SK-N-SH (cell line): ENCODE measurements at regions of chr12 and their contacts with region 1.

Region 1: DNA sequence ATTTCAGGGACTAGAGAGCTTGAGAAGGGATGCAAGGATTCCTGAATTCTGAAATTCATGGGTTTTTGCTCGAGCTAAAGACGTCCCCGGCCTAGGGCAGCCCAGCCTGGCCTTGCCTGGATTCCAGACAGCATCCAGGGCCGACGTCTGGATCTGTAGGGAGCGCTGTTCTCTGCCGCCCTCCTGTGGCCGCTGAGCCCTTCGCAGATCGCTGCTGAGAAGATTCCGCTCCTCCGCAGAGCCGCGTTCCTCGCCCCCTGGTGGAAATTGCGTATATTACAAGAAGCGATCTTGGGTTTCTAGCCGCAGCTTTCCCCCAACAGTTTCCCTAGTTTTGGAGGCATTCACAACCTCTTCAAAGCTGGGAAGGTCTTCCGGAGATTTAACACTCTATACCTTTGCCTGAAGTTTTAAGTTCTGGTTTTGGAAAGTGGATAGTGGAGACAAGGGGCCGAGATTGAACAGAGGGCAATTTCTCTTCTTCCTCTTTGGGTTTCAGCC is 5.1 kb downstream of the CISTR start:
- DNase-seq: peak; percentile 92
- H3K4me3 ChIP-seq: peak overlapping the region in 1 of 2 experiments; percentile 20; a peak in 1 of 4 replicates
- H3K27ac ChIP-seq: no peak overlapping the region
- H3K4me1 ChIP-seq: peaks cover 0 to 10% of the 10 kb centered on the region in 2 experiments; a peak in 1 of 4 replicates
- H3K27me3 ChIP-seq: peaks cover 78% of the 10 kb centered on the region
- CTCF ChIP-seq: peak; percentile 99
- EP300 ChIP-seq: no peak
- RAD21 ChIP-seq: peak; percentile 87

Region 2: GRCh38 chr12:53561590-53561953 is 185.1 kb before region 1 on chr12:
- CTCF ChIA-PET with region 1: interaction called, 11 read pairs
- POLR2A ChIA-PET with region 1: no interaction called
- DNase-seq: no peak
- H3K4me3 ChIP-seq: no peak overlapping the region
- H3K27ac ChIP-seq: peak overlapping the region; percentile 39 to 89; a peak in 3 of 4 replicates
- H3K4me1 ChIP-seq: peaks cover 0 to 19% of the 10 kb centered on the region in 2 experiments; a peak in 2 of 4 replicates
- H3K27me3 ChIP-seq: no peaks in the 10 kb centered on the region
- CTCF ChIP-seq: no peak
- EP300 ChIP-seq: no peak
- RAD21 ChIP-seq: no peak

Region 3: DNA sequence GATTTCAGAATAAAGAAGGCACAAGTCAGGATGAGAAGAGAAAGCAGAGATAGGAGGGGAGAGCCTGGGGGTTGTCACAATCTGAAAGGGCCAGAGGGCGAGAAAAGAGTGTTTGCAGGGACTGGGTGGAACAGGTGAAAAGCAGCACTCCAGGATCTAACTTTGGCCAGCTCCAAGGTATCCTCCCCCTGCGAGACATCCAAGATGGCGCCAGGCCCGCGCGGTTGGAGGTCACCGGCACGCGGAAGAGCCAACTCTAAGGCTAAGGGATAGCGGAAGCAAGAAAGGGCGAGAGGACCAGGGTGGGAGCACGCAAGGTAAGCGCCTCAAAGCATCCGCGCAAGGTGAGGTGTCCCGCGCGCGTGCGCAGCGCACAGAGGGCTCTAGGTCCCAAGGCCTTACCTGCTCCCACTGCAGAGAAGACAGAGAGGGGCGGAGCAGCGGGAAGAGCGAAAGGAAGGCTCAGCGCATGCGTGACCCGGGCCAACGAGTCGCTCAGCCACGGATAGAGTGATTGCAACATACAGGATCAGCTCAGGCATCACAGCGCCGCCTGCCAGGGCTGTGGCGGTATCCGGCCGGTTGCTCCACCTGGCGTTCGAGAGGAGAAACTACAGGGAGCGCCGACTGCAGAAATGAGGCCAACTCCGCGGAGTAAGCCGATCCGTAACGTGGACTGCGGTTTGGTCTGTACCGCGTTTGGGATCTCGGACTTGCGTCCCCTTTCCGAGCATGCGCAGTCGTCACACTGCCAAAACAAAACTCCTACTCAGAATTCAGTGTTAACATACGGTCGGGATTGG is 70.8 kb before region 1 on chr12 and contains the start of gene ATP5MC2:
- CTCF ChIA-PET with region 1: interaction called, 27 read pairs
- POLR2A ChIA-PET with region 1: no interaction called
- DNase-seq: peak; percentile 98
- H3K4me3 ChIP-seq: peak within 1 kb of the TSS; percentile 70 to 75
- H3K27ac ChIP-seq: peak within 1 kb of the TSS; percentile 44 to 91
- H3K4me1 ChIP-seq: peaks cover 0 to 8% of the 10 kb centered on the region in 2 experiments; a peak in 2 of 4 replicates
- H3K27me3 ChIP-seq: no peaks in the 10 kb centered on the region
- CTCF ChIP-seq: peak; percentile 98
- EP300 ChIP-seq: no peak
- RAD21 ChIP-seq: peak; percentile 81
- polyA plus RNA-seq, gene ATP5MC2: 309 and 319 TPM in 2 replicates

Region 4: DNA sequence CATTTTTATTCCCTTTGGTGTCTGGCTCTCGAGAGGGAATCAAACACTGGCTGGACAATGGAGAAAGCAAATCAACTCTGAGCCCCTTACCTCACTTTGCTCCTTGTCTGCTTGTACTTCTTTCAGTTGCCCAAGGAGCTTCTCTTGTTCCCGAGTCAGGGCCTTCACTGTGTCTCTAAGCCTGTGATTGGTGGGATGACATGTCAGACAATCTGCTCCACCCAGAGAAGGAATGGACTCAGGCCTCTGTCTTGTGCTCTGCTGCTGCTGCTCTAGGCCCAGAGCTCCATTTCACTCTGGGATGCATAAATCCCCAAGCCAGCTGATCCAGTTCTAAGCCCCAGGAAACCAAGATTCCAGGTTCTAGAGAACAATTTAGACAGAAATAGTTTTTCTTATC is 27.0 kb before region 1 on chr12:
- CTCF ChIA-PET with region 1: interaction called, 356 read pairs
- POLR2A ChIA-PET with region 1: no interaction called
- DNase-seq: no peak
- H3K4me3 ChIP-seq: no peak overlapping the region
- H3K27ac ChIP-seq: no peak overlapping the region
- H3K4me1 ChIP-seq: no peaks in the 10 kb centered on the region
- H3K27me3 ChIP-seq: no peaks in the 10 kb centered on the region
- CTCF ChIP-seq: no peak
- EP300 ChIP-seq: no peak
- RAD21 ChIP-seq: no peak

Region 5: GRCh38 chr12:53757095-53757770 is 10.6 kb after region 1 on chr12:
- CTCF ChIA-PET with region 1: interaction called, 121 read pairs
- POLR2A ChIA-PET with region 1: no interaction called
- DNase-seq: peak; percentile 79
- H3K4me3 ChIP-seq: no peak overlapping the region; a peak in 1 of 4 replicates
- H3K27ac ChIP-seq: no peak overlapping the region
- H3K4me1 ChIP-seq: peaks cover 2 to 9% of the 10 kb centered on the region in 2 experiments; a peak in 1 of 4 replicates
- H3K27me3 ChIP-seq: peaks cover 87% of the 10 kb centered on the region
- CTCF ChIP-seq: peak; percentile 81
- EP300 ChIP-seq: no peak
- RAD21 ChIP-seq: peak; percentile 35

Region 6: DNA sequence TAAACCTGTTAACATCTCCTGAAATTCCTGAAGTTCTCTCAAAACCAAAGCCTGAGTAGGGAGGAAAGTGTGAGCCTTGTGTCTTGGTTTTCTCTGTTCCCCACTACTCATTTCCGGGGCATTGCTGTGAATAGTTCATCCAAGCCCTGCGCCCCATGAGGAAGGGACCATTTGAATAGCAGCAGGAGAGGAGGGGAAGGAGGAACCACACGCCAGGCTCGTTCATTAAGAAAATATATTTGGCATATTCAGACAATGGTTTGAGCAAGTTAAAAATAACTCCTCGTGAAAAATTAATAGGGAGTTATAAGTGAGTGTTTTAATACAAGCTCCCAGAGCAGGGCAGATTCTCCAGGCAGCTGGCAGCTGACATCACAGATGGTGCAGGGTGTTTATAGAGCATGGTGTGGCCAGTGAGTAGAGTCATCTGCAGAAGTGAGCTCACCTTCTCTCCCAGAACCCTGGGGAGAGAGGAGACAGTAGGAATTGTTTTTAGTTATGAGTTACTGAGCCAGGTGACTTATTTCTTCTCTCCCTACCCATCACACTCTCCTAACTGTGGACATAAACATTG is 34.7 kb after region 1 on chr12:
- CTCF ChIA-PET with region 1: interaction called, 10 read pairs
- POLR2A ChIA-PET with region 1: no interaction called
- DNase-seq: no peak
- H3K4me3 ChIP-seq: no peak overlapping the region
- H3K27ac ChIP-seq: no peak overlapping the region
- H3K4me1 ChIP-seq: no peaks in the 10 kb centered on the region
- H3K27me3 ChIP-seq: peaks cover 74% of the 10 kb centered on the region
- CTCF ChIP-seq: no peak
- EP300 ChIP-seq: no peak
- RAD21 ChIP-seq: no peak

Region 7: DNA sequence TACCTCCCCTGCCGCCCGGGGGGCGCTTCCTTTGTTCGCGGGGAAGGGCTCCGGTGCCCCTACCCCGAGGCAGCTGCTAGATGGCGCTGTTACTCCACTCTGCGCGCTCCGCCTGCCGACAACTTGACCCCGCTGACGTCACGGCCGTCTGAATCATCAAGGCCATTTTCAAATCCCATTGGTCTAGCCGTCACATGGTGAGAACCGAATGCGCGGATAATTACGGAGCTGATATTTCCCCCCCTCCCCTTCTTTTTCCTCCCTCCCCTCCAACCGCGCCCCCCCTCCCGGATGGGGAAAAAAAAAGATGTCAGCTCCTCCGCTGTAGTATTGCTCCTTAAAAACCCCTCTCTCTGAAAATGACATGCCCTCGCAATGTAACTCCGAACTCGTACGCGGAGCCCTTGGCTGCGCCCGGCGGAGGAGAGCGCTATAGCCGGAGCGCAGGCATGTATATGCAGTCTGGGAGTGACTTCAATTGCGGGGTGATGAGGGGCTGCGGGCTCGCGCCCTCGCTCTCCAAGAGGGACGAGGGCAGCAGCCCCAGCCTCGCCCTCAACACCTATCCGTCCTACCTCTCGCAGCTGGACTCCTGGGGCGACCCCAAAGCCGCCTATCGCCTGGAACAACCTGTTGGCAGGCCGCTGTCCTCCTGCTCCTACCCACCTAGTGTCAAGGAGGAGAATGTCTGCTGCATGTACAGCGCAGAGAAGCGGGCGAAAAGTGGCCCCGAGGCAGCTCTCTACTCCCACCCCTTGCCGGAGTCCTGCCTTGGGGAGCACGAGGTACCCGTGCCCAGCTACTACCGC is 238.5 kb after region 1 on chr12 and contains the start of gene HOXC10:
- CTCF ChIA-PET with region 1: interaction called, 12 read pairs
- POLR2A ChIA-PET with region 1: no interaction called
- DNase-seq: peak; percentile 97
- H3K4me3 ChIP-seq: peak within 1 kb of the TSS; percentile 41 to 52; a peak in 3 of 4 replicates
- H3K27ac ChIP-seq: no peak within 1 kb of the TSS
- H3K4me1 ChIP-seq: peaks cover 0 to 12% of the 10 kb centered on the region in 2 experiments; a peak in 1 of 4 replicates
- H3K27me3 ChIP-seq: peaks cover 95% of the 10 kb centered on the region
- CTCF ChIP-seq: peak; percentile 80
- EP300 ChIP-seq: no peak
- RAD21 ChIP-seq: peak; percentile 88
- polyA plus RNA-seq, gene HOXC10: 0.03 and 0.08 TPM in 2 replicates

Region 8: DNA sequence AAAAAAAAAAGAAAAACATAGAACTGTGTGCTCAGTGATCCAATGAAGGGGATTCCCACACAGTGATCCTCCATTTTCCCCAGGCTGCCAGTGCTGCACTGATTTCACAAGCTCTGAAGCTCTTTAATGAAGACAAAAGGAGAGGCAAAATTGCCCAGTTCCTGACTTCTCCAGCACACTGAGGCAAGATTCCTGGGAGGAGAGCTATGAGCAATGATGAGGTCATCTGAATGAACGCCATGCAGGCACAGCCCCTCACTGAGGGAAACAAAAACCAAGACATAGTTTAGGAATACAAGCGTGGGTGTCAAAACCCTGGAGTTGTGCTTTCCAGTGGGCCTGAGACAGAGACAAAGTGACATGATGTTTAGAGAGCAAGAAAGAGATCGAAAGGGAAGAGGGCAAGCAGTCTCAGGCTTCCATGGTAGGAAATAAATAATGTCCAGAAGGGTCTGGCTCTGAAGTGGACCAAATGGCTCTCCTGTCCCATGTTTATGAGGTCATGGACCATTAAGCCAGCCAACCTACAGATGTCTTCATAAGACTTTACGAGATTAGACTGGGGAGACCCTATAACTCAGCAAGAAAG is 483.1 kb after region 1 on chr12:
- CTCF ChIA-PET with region 1: no interaction called
- POLR2A ChIA-PET with region 1: no interaction called
- DNase-seq: no peak
- H3K4me3 ChIP-seq: no peak overlapping the region
- H3K27ac ChIP-seq: peak overlapping the region; percentile 36 to 88; a peak in 3 of 4 replicates
- H3K4me1 ChIP-seq: peaks cover 2 to 17% of the 10 kb centered on the region in 2 experiments; a peak in 3 of 4 replicates
- H3K27me3 ChIP-seq: no peaks in the 10 kb centered on the region
- CTCF ChIP-seq: no peak
- EP300 ChIP-seq: peak in 1 of 2 experiments; percentile 35; a peak in 1 of 4 replicates
- RAD21 ChIP-seq: no peak